Body of pancreas (tissue), 4 donors: ENCODE measurements at regions of chr2 and their contacts with region 1.

Region 1: GRCh38 chr2:129936334-129936934 is 43.0 kb upstream of the RAB6C start:
- DNase-seq: peak in 2 of 4 donors; percentile 66 to 67
- ATAC-seq: no peak
- H3K4me3 ChIP-seq: no peak overlapping the region
- H3K27ac ChIP-seq: no peak overlapping the region
- H3K4me1 ChIP-seq: no peaks in the 10 kb centered on the region
- H3K27me3 ChIP-seq: peaks cover 0 to 12% of the 10 kb centered on the region in 2 donors
- CTCF ChIP-seq: peak in 3 of 7 experiments; percentile 46 to 53 (median 50)
- POLR2A ChIP-seq: no peak

Region 2: GRCh38 chr2:130332271-130333073 is 396.0 kb after region 1 on chr2:
- intact Hi-C with region 1: loop called (anchors 10 kb)
- DNase-seq: peak; percentile 68 to 74 (median 70)
- ATAC-seq: peak; percentile 62
- H3K4me3 ChIP-seq: no peak overlapping the region
- H3K27ac ChIP-seq: no peak overlapping the region
- H3K4me1 ChIP-seq: peaks cover 18% of the 10 kb centered on the region
- H3K27me3 ChIP-seq: no peaks in the 10 kb centered on the region
- CTCF ChIP-seq: peak; percentile 82 to 95 (median 87)
- POLR2A ChIP-seq: no peak